H1 (cell line): ENCODE measurements at regions of chr13 and their contacts with region 1.

Region 1: GRCh38 chr13:113393563-113394338 is 29.8 kb upstream of the GRTP1 start:
- DNase-seq: peak; percentile 60 to 92
- H3K4me3 ChIP-seq: peak overlapping the region; percentile 51 to 65 (median 56)
- H3K27ac ChIP-seq: no peak overlapping the region; the same call in 1 of the 2 replicates
- H3K4me1 ChIP-seq: peaks cover 8 to 16% (median 12%) of the 10 kb centered on the region in 4 experiments
- H3K27me3 ChIP-seq: no peaks in the 10 kb centered on the region
- CTCF ChIP-seq: peak in 2 of 3 experiments; percentile 70 to 95; a peak in 3 of 4 replicates
- EP300 ChIP-seq: no peak
- POLR2A ChIP-seq: no peak
- RAD21 ChIP-seq: peak; percentile 73 to 95

Region 2: GRCh38 chr13:113327766-113328471 is 65.8 kb before region 1 on chr13:
- CTCF ChIA-PET with region 1: interaction called, 10 read pairs
- POLR2A ChIA-PET with region 1: interaction called, 8 read pairs
- DNase-seq: no peak
- H3K4me3 ChIP-seq: no peak overlapping the region
- H3K27ac ChIP-seq: no peak overlapping the region
- H3K4me1 ChIP-seq: peaks cover 0 to 5% (median 0%) of the 10 kb centered on the region in 4 experiments; a peak in 3 of 7 replicates
- H3K27me3 ChIP-seq: no peaks in the 10 kb centered on the region
- CTCF ChIP-seq: no peak
- EP300 ChIP-seq: no peak
- POLR2A ChIP-seq: peak in 1 of 2 experiments; percentile 26; a peak in 1 of 3 replicates
- RAD21 ChIP-seq: no peak

Region 3: GRCh38 chr13:113350065-113350937 is 43.5 kb before region 1 on chr13:
- CTCF ChIA-PET with region 1: interaction called, 37 read pairs
- POLR2A ChIA-PET with region 1: interaction called, 8 read pairs
- DNase-seq: no peak
- H3K4me3 ChIP-seq: no peak overlapping the region
- H3K27ac ChIP-seq: no peak overlapping the region
- H3K4me1 ChIP-seq: no peaks in the 10 kb centered on the region
- H3K27me3 ChIP-seq: no peaks in the 10 kb centered on the region
- CTCF ChIP-seq: peak in 2 of 3 experiments; percentile 24 to 43; a peak in 2 of 4 replicates
- EP300 ChIP-seq: no peak
- POLR2A ChIP-seq: no peak
- RAD21 ChIP-seq: peak; percentile 48 to 63; a peak in 3 of 4 replicates

Region 4: GRCh38 chr13:113364311-113364889 is 29.4 kb before region 1 on chr13:
- CTCF ChIA-PET with region 1: interaction called, 17 read pairs
- POLR2A ChIA-PET with region 1: interaction called, 34 read pairs
- DNase-seq: no peak
- H3K4me3 ChIP-seq: peak overlapping the region in 3 of 4 experiments; percentile 6 to 52 (median 10); a peak in 4 of 8 replicates
- H3K27ac ChIP-seq: no peak overlapping the region; the same call in 1 of the 2 replicates
- H3K4me1 ChIP-seq: peaks cover 2 to 25% (median 7%) of the 10 kb centered on the region in 4 experiments
- H3K27me3 ChIP-seq: 0 out of 7 replicates have a peak, but pooled peaks cover 0 to 4% (median 0%) of the 10 kb centered on the region in 4 experiments
- CTCF ChIP-seq: no peak
- EP300 ChIP-seq: no peak
- POLR2A ChIP-seq: no peak; a peak in 1 of 3 replicates
- RAD21 ChIP-seq: no peak

Region 5: DNA sequence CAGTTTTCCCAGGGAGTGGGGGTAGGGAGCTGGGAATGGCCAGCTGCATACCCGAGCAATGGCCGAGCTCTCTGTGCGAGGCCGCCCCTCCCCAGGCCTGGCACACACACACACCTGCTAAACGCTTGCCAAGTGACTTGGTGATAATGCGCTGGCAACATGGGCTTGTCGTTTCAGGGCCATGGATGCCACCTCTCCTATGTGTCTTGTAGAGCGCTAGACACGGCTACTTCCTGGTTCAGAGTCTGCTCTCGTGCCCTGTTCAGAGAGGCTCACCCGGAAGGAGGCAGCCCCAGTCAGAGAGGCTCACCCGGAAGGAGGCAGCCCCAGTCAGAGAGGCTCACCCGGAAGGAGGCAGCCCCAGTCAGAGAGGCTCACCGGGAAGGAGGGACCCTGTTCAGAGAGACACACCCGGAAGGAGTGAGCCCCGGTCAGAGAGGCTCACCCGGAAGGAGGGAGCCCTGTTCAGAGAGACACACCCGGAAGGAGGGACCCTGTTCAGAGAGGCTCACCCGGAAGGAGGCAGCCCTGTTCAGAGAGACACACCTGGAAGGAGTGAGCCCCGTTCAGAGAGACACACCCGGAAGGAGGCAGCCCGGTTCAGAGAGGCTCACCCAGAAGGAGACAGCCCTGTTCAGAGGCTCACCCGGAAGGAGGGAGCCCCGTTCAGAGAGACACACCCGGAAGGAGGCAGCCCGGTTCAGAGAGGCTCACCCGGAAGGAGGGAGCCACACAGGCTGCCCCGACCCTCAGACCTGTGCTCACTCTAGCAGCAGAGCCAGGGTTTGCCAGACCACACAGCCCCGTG is 55.3 kb after region 1 on chr13:
- CTCF ChIA-PET with region 1: interaction called, 14 read pairs
- POLR2A ChIA-PET with region 1: no interaction called
- DNase-seq: no peak
- H3K4me3 ChIP-seq: no peak overlapping the region
- H3K27ac ChIP-seq: no peak overlapping the region
- H3K4me1 ChIP-seq: peaks cover 0 to 5% (median 0%) of the 10 kb centered on the region in 4 experiments; a peak in 2 of 7 replicates
- H3K27me3 ChIP-seq: no peaks in the 10 kb centered on the region
- CTCF ChIP-seq: no peak
- EP300 ChIP-seq: no peak
- POLR2A ChIP-seq: no peak
- RAD21 ChIP-seq: no peak

Region 6: DNA sequence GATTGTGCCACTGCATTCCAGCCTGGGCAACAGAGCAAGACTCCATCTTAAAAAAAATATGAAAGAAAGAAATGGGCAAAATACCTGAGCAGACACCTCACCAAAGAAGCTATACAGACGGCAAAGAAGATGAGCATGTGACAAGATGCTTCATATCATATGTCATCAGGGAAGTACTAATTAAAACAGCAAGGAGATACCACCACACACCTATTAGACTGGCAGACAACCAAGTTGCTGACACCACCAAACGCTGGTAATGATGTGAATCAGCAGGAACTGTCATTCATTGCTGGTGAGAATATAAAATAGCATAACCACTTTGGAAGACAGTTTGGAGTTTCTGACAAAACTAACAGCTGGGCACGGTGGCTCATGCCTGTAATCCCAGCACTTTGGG is 179.3 kb after region 1 on chr13:
- CTCF ChIA-PET with region 1: no interaction called
- POLR2A ChIA-PET with region 1: no interaction called
- DNase-seq: no peak
- H3K4me3 ChIP-seq: no peak overlapping the region
- H3K27ac ChIP-seq: no peak overlapping the region
- H3K4me1 ChIP-seq: no peaks in the 10 kb centered on the region
- H3K27me3 ChIP-seq: no peaks in the 10 kb centered on the region
- CTCF ChIP-seq: no peak
- EP300 ChIP-seq: no peak
- POLR2A ChIP-seq: no peak
- RAD21 ChIP-seq: no peak